ENCODE measurements at regions of chr1 and their contacts with region 1.

Region 1: GRCh38 chr1:40592107-40592803 is 60.8 kb downstream of the ZNF684 start:
- DNase-seq: peak in 1 of 2 donors; percentile 48
- H3K4me3 ChIP-seq: no peak overlapping the region
- CTCF ChIP-seq: no peak
- POLR2A ChIP-seq: no peak

Region 2: DNA sequence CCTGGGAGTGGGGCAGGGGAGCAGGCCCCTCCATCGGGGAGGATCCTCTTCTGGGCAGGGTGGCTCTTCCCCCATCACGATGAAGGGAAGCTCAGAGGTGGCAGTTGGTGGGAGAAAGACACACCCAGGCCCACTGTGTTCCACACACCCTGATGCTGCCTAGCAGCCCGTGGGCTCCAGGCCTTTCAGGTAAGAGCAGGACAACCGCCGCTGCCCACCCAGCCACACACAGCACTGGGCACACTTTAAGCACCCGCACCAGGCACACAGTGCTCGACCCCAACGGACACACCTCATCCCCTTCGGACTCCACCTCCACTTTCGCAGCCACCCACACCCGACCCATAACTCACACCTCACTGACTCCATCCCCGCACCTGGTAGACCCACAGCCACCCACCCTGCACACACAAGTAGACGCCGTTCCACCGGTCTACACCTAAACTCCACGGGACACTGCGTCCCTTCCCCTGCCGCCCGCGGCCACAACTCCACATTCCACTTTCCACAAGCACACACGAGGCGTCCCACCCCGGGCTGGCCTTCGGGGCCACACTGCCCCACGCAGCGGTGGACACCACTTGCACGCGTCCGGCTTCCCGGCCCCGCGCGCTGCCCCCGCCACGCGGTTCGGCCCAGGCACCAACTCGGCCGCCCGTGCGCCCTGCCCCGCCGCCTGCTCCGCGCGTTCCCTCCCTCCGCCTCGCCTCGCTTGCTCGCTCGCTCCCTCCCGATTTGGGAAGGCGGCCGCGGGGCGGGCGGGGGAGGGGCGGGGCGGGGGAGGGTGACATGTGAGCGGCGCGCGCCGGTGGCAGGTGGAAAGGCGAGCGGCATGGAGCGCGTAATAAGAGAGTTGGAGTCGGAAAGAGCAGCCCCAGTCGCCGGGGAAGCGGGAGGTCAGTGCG is 191.0 kb after region 1 on chr1 and contains the start of gene KCNQ4:
- intact Hi-C with region 1: no loop called
- DNase-seq: no peak
- H3K4me3 ChIP-seq: no peak within 1 kb of the TSS
- CTCF ChIP-seq: no peak
- POLR2A ChIP-seq: no peak
- total RNA-seq, gene KCNQ4: 1.3 to 2.7 (median 2.0) TPM

Region 3: DNA sequence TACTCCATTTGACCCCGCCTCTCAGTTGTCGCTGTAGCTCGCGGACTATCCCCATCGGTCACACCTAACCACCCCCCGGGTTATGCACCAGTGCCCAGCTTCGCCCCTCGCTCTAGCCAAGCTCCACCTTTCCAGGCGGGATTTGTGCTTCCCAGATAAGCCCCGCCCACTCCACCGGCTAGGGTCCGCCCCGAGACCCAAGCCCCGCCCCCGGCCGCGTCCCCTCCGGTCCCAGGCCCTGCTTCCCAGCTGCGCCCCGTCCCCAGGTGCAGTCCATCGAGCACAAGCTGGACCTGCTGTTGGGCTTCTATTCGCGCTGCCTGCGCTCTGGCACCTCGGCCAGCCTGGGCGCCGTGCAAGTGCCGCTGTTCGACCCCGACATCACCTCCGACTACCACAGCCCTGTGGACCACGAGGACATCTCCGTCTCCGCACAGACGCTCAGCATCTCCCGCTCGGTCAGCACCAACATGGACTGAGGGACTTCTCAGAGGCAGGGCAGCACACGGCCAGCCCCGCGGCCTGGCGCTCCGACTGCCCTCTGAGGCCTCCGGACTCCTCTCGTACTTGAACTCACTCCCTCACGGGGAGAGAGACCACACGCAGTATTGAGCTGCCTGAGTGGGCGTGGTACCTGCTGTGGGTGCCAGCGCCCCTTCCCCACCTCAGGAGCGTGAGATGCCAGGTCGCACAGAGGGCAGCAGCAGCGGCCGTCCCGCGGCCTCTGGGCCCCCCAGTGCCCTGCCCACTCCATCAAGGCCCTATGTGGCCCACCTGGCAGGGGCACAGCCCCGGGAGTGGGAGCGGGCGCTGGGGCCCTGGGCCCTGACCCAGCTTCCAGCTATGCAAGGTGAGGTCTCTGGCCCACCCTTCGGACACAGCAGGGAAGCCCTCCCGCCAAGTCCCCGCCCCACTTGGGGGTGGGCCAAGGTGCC is 246.1 kb after region 1 on chr1:
- intact Hi-C with region 1: loop called (anchors 10 kb)
- DNase-seq: no peak
- H3K4me3 ChIP-seq: no peak overlapping the region
- CTCF ChIP-seq: no peak
- POLR2A ChIP-seq: no peak

Measured in lower leg skin (tissue), 4 donors.